Heart left ventricle (tissue), 16 donors: ENCODE measurements at regions of chr12 and their contacts with region 1.

Region 1: DNA sequence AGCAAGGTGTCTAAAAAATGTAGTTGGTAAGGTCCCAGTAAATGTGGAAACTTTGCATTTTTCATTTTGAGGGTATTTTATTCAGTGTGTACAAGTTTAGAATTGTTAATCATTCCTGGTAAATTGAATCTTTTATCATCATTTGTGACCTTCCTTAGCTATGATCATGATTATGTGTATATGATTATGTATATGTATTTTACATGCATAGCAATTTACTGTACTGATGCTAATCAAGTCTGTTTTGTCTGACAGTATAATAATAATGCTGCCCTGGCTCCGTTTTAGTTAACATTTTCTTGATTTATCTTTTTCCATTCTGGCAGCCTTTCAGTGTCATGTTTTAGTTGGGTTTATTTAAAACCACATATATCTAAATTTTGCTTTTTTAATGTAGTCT is 9.4 kb downstream of the WASHC4 start:
- DNase-seq: no peak
- ATAC-seq: no peak
- H3K4me3 ChIP-seq: no peak overlapping the region
- H3K27ac ChIP-seq: no peak overlapping the region
- H3K4me1 ChIP-seq: peaks cover 0 to 19% (median 2%) of the 10 kb centered on the region in 12 donors
- H3K27me3 ChIP-seq: no peaks in the 10 kb centered on the region
- CTCF ChIP-seq: no peak
- POLR2A ChIP-seq: no peak

Region 2: GRCh38 chr12:105158876-105159275 is 41.9 kb after region 1 on chr12:
- intact Hi-C with region 1: loop called in 1 of 10 experiments (anchors 5 kb)
- DNase-seq: no peak
- ATAC-seq: no peak
- H3K4me3 ChIP-seq: no peak overlapping the region
- H3K27ac ChIP-seq: no peak overlapping the region
- H3K4me1 ChIP-seq: no peaks in the 10 kb centered on the region
- H3K27me3 ChIP-seq: no peaks in the 10 kb centered on the region
- CTCF ChIP-seq: no peak
- POLR2A ChIP-seq: no peak

Region 3: GRCh38 chr12:105226219-105226618 is 109.2 kb after region 1 on chr12:
- intact Hi-C with region 1: no loop called
- DNase-seq: peak in 4 of 5 donors; percentile 66 to 74 (median 69)
- ATAC-seq: peak; percentile 76 to 92 (median 89)
- H3K4me3 ChIP-seq: peak overlapping the region in 1 of 12 donors; percentile 3
- H3K27ac ChIP-seq: peak overlapping the region in 11 of 12 donors; percentile 0 to 80 (median 52)
- H3K4me1 ChIP-seq: peaks cover 0 to 98% (median 58%) of the 10 kb centered on the region in 12 donors
- H3K27me3 ChIP-seq: no peaks in the 10 kb centered on the region
- CTCF ChIP-seq: no peak
- POLR2A ChIP-seq: no peak